ENCODE measurements at regions of chr12 and their contacts with region 1.

Region 1: GRCh38 chr12:118073768-118074167 is 12.8 kb upstream of the WSB2 start:
- DNase-seq: no peak

Region 2: GRCh38 chr12:117742721-117743120 is 331.0 kb before region 1 on chr12:
- intact Hi-C with region 1: no loop called
- DNase-seq: no peak

Region 3: DNA sequence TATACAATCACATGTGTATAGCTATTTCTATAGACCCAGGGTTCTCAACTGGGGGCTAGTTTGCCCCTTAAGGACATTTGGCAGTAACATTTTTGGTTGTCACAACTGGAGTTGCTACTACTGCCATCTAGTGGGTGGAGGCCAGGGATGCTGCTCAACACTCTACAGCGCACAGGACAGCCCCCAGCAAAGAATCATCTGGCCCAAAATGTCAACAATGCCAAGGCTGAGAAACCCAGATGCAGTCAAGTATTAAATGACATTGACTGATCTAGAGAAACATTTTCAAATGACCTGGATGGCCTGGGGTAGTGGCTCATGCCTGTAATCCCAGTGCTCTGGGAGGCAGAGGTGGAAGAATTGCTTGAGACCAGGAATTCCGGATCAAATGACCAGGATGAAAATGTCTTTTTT is 18.6 kb before region 1 on chr12:
- intact Hi-C with region 1: loop called in 1 of 2 experiments (anchors 1 kb)
- DNase-seq: no peak

Region 4: GRCh38 chr12:118089782-118090181 is 16.0 kb after region 1 on chr12:
- intact Hi-C with region 1: no loop called
- DNase-seq: no peak